ENCODE measurements at regions of chr11 and their contacts with region 1.

Region 1: GRCh38 chr11:108551651-108552462 is 41.7 kb downstream of the EXPH5 start:
- DNase-seq: peak in 1 of 2 experiments; percentile 39
- H3K4me3 ChIP-seq: no peak overlapping the region
- H3K4me3 Mint-ChIP-seq: peak overlapping the region; percentile 38
- H3K27ac Mint-ChIP-seq: peak overlapping the region; percentile 40
- H3K4me1 ChIP-seq: peaks cover 51% of the 10 kb centered on the region
- H3K4me1 Mint-ChIP-seq: peaks cover 35% of the 10 kb centered on the region
- H3K27me3 ChIP-seq: no peaks in the 10 kb centered on the region
- H3K27me3 Mint-ChIP-seq: no peaks in the 10 kb centered on the region
- CTCF ChIP-seq: no peak

Region 2: GRCh38 chr11:108414958-108415357 is 136.9 kb before region 1 on chr11:
- CTCF ChIA-PET with region 1: no interaction called
- POLR2A ChIA-PET with region 1: no interaction called
- intact Hi-C with region 1: loop called (anchors 5 kb)
- DNase-seq: no peak
- H3K4me3 ChIP-seq: no peak overlapping the region
- H3K4me3 Mint-ChIP-seq: no peak overlapping the region
- H3K27ac Mint-ChIP-seq: no peak overlapping the region
- H3K4me1 ChIP-seq: no peaks in the 10 kb centered on the region
- H3K4me1 Mint-ChIP-seq: no peaks in the 10 kb centered on the region
- H3K27me3 ChIP-seq: no peaks in the 10 kb centered on the region
- H3K27me3 Mint-ChIP-seq: peaks cover 3% of the 10 kb centered on the region
- CTCF ChIP-seq: no peak

Region 3: GRCh38 chr11:108568195-108568858 is 16.5 kb after region 1 on chr11:
- CTCF ChIA-PET with region 1: interaction called, 3 read pairs
- POLR2A ChIA-PET with region 1: no interaction called
- intact Hi-C with region 1: loop called (anchors 1 kb)
- DNase-seq: no peak
- H3K4me3 ChIP-seq: no peak overlapping the region
- H3K4me3 Mint-ChIP-seq: no peak overlapping the region
- H3K27ac Mint-ChIP-seq: no peak overlapping the region
- H3K4me1 ChIP-seq: peaks cover 19% of the 10 kb centered on the region
- H3K4me1 Mint-ChIP-seq: peaks cover 24% of the 10 kb centered on the region
- H3K27me3 ChIP-seq: no peaks in the 10 kb centered on the region
- H3K27me3 Mint-ChIP-seq: no peaks in the 10 kb centered on the region
- CTCF ChIP-seq: no peak